Endothelial cell of umbilical vein (primary cell): ENCODE measurements at regions of chr9 and their contacts with region 1.

Region 1: GRCh38 chr9:137534256-137535117 is 15.7 kb downstream of the PNPLA7 start:
- DNase-seq: peak; percentile 71
- H3K4me3 ChIP-seq: no peak overlapping the region
- H3K27ac ChIP-seq: no peak overlapping the region
- H3K4me1 ChIP-seq: peaks cover 2% of the 10 kb centered on the region
- H3K27me3 ChIP-seq: no peaks in the 10 kb centered on the region
- CTCF ChIP-seq: peak; percentile 66 to 71
- POLR2A ChIP-seq: no peak

Region 2: GRCh38 chr9:137521405-137521985 is 13.0 kb before region 1 on chr9:
- CTCF ChIA-PET with region 1: interaction called, 10 read pairs
- POLR2A ChIA-PET with region 1: no interaction called
- dilution Hi-C with region 1: no loop called
- intact Hi-C with region 1: no loop called
- DNase-seq: no peak
- H3K4me3 ChIP-seq: no peak overlapping the region
- H3K27ac ChIP-seq: no peak overlapping the region
- H3K4me1 ChIP-seq: no peaks in the 10 kb centered on the region
- H3K27me3 ChIP-seq: no peaks in the 10 kb centered on the region
- CTCF ChIP-seq: no peak
- POLR2A ChIP-seq: no peak

Region 3: DNA sequence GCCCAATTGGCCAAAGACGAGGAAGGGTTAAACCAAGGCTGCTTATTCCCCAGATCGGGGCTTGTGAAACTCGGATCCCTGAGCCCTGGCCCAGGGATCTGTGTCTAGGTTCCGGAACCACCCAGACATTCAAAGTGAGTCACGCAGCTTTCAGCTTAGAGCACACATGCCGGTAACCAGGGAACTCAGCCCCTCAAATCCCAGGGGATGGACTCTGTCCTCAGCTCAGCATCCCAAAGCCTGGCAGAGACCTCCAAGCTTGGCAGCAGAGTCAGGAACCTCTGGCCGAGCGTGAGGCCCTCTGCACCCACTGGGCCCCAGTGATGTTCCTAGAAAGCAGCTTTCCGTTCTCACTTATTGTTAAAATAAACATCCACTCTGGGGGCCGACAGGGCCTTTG is 10.6 kb after region 1 on chr9:
- CTCF ChIA-PET with region 1: interaction called, 16 read pairs
- POLR2A ChIA-PET with region 1: no interaction called
- dilution Hi-C with region 1: no loop called
- intact Hi-C with region 1: no loop called
- DNase-seq: no peak
- H3K4me3 ChIP-seq: no peak overlapping the region
- H3K27ac ChIP-seq: no peak overlapping the region
- H3K4me1 ChIP-seq: no peaks in the 10 kb centered on the region
- H3K27me3 ChIP-seq: no peaks in the 10 kb centered on the region
- CTCF ChIP-seq: no peak
- POLR2A ChIP-seq: no peak